Activated CD8-positive, alpha-beta T cell treated with anti-CD3 and anti-CD28 coated beads for 36 hours (primary cell): ENCODE measurements at regions of chr18 and their contacts with region 1.

Region 1: DNA sequence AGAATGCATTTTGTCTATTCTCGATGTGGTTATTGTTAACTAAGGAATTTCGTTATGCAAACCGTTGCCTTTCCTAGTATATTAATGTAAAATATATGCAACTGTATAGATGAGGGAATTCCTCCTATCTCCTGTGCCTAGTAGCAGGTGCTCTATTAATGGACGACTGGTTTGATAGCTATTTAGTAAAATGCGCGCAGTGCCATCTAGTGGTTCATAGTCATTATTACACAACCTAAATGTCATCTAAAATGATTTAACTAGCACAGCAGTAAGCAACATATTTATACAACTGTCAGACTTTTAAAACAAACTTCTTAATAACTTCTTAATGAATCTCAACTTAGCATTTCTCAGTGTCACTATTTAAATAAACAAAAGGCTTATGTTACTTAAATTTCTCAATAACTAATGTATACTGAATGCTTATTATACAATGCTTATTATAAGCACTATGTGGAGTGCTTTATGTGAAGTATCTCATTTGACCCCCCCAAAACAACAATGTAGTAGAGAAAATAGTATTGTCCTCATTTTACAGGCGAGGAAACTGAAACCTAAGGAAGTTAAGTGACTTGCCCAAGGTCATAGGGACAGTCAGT is 77.9 kb downstream of the DTNA start:
- DNase-seq: peak; percentile 58
- ATAC-seq: peak; percentile 78
- H3K4me3 Mint-ChIP-seq: no peak overlapping the region
- H3K27ac Mint-ChIP-seq: no peak overlapping the region
- H3K4me1 Mint-ChIP-seq: peaks cover 8% of the 10 kb centered on the region
- H3K27me3 Mint-ChIP-seq: peaks cover 13% of the 10 kb centered on the region
- CTCF ChIP-seq: peak; percentile 82

Region 2: GRCh38 chr18:34122724-34123334 is 665.2 kb before region 1 on chr18:
- CTCF ChIA-PET with region 1: interaction called, 9 read pairs
- POLR2A ChIA-PET with region 1: no interaction called
- intact Hi-C with region 1: loop called (anchors 10 kb)
- DNase-seq: peak; percentile 26
- ATAC-seq: peak; percentile 60
- H3K4me3 Mint-ChIP-seq: no peak overlapping the region
- H3K27ac Mint-ChIP-seq: no peak overlapping the region
- H3K4me1 Mint-ChIP-seq: no peaks in the 10 kb centered on the region
- H3K27me3 Mint-ChIP-seq: no peaks in the 10 kb centered on the region
- CTCF ChIP-seq: peak; percentile 89

Region 3: GRCh38 chr18:34506198-34506597 is 281.8 kb before region 1 on chr18:
- CTCF ChIA-PET with region 1: no interaction called
- POLR2A ChIA-PET with region 1: no interaction called
- intact Hi-C with region 1: no loop called
- DNase-seq: no peak
- ATAC-seq: no peak
- H3K4me3 Mint-ChIP-seq: no peak overlapping the region
- H3K27ac Mint-ChIP-seq: no peak overlapping the region
- H3K4me1 Mint-ChIP-seq: no peaks in the 10 kb centered on the region
- H3K27me3 Mint-ChIP-seq: no peaks in the 10 kb centered on the region
- CTCF ChIP-seq: no peak

Region 4: GRCh38 chr18:34764451-34764850 is 23.6 kb before region 1 on chr18:
- CTCF ChIA-PET with region 1: interaction called, 12 read pairs
- POLR2A ChIA-PET with region 1: no interaction called
- intact Hi-C with region 1: no loop called
- DNase-seq: no peak
- ATAC-seq: no peak
- H3K4me3 Mint-ChIP-seq: no peak overlapping the region
- H3K27ac Mint-ChIP-seq: no peak overlapping the region
- H3K4me1 Mint-ChIP-seq: no peaks in the 10 kb centered on the region
- H3K27me3 Mint-ChIP-seq: peaks cover 14% of the 10 kb centered on the region
- CTCF ChIP-seq: no peak